Activated naive CD4-positive, alpha-beta T cell treated with anti-CD3 and anti-CD28 coated beads for 36 hours (primary cell): ENCODE measurements at regions of chr2 and their contacts with region 1.

Region 1: GRCh38 chr2:136384531-136385303 is 266.8 kb upstream of the CXCR4 start:
- DNase-seq: peak; percentile 73
- H3K4me3 Mint-ChIP-seq: no peak overlapping the region
- H3K27ac Mint-ChIP-seq: no peak overlapping the region
- H3K4me1 Mint-ChIP-seq: peaks cover 41% of the 10 kb centered on the region
- H3K27me3 Mint-ChIP-seq: no peaks in the 10 kb centered on the region

Region 2: GRCh38 chr2:135004005-135004746 is 1380.5 kb before region 1 on chr2:
- CTCF ChIA-PET with region 1: interaction called, 4 read pairs
- intact Hi-C with region 1: loop called (anchors 1 kb)
- DNase-seq: peak; percentile 79
- H3K4me3 Mint-ChIP-seq: no peak overlapping the region
- H3K27ac Mint-ChIP-seq: no peak overlapping the region
- H3K4me1 Mint-ChIP-seq: peaks cover 5% of the 10 kb centered on the region
- H3K27me3 Mint-ChIP-seq: peaks cover 12% of the 10 kb centered on the region

Region 3: GRCh38 chr2:135741395-135742324 is 643.1 kb before region 1 on chr2 and contains the start of gene UBXN4:
- CTCF ChIA-PET with region 1: no interaction called
- intact Hi-C with region 1: loop called (anchors 1 kb)
- DNase-seq: peak; percentile 98
- H3K4me3 Mint-ChIP-seq: peak within 1 kb of the TSS; percentile 98
- H3K27ac Mint-ChIP-seq: peak within 1 kb of the TSS; percentile 99
- H3K4me1 Mint-ChIP-seq: peaks cover 30% of the 10 kb centered on the region
- H3K27me3 Mint-ChIP-seq: no peaks in the 10 kb centered on the region
- total RNA-seq, gene UBXN4: 100 to 105 TPM

Region 4: GRCh38 chr2:135876066-135876711 is 508.5 kb before region 1 on chr2 and contains the start of gene MCM6:
- CTCF ChIA-PET with region 1: interaction called, 6 read pairs
- intact Hi-C with region 1: loop called (anchors 1 kb)
- DNase-seq: peak; percentile 100
- H3K4me3 Mint-ChIP-seq: peak within 1 kb of the TSS; percentile 91
- H3K27ac Mint-ChIP-seq: peak within 1 kb of the TSS; percentile 99
- H3K4me1 Mint-ChIP-seq: peaks cover 39% of the 10 kb centered on the region
- H3K27me3 Mint-ChIP-seq: no peaks in the 10 kb centered on the region
- total RNA-seq, gene MCM6: 221 to 226 TPM

Region 5: GRCh38 chr2:136008205-136008865 is 376.4 kb before region 1 on chr2:
- CTCF ChIA-PET with region 1: no interaction called
- intact Hi-C with region 1: loop called (anchors 1 kb)
- DNase-seq: peak; percentile 73
- H3K4me3 Mint-ChIP-seq: no peak overlapping the region
- H3K27ac Mint-ChIP-seq: peak overlapping the region; percentile 15
- H3K4me1 Mint-ChIP-seq: peaks cover 38% of the 10 kb centered on the region
- H3K27me3 Mint-ChIP-seq: no peaks in the 10 kb centered on the region

Region 6: GRCh38 chr2:136135921-136136906 is 248.5 kb before region 1 on chr2:
- CTCF ChIA-PET with region 1: interaction called, 7 read pairs
- intact Hi-C with region 1: loop called (anchors 1 kb)
- DNase-seq: peak; percentile 78
- H3K4me3 Mint-ChIP-seq: no peak overlapping the region
- H3K27ac Mint-ChIP-seq: peak overlapping the region; percentile 79
- H3K4me1 Mint-ChIP-seq: peaks cover 94% of the 10 kb centered on the region
- H3K27me3 Mint-ChIP-seq: peaks cover 25% of the 10 kb centered on the region

Region 7: DNA sequence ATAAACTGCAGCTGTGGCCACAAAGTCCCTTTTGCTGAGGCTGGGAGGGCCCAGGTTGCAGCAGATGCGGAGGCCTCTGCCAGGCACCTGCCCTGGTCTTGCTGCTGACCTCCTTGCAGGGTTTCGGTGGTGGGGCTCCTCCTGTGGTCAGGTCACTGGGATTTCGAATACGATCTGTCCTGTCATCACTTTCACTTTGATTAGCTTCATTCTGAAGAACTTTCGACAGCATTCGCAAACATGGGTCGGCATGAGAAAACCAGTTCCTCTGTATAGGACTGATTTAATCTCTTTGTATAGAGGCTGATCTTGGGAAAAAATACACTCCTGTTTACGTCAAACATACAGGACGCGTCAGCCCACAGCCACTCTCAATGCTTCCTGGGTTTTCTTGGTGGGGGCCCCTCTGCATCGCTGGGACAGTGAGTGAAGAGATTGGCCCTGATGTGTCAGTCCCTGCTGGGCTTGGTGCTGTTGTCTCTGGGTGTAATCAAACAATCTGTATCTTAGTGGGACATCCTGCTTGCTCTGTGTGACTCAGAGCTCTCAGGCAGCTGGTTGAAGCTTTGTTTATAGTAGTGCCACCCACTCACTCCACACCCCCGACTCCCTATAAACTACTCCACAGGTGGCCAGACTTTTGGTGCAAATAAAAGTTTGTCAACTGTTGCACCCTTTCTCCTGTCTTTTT is 57.4 kb before region 1 on chr2:
- CTCF ChIA-PET with region 1: interaction called, 4 read pairs
- intact Hi-C with region 1: loop called (anchors 1 kb)
- DNase-seq: peak; percentile 89
- H3K4me3 Mint-ChIP-seq: peak overlapping the region; percentile 52
- H3K27ac Mint-ChIP-seq: peak overlapping the region; percentile 82
- H3K4me1 Mint-ChIP-seq: peaks cover 62% of the 10 kb centered on the region
- H3K27me3 Mint-ChIP-seq: no peaks in the 10 kb centered on the region

Region 8: GRCh38 chr2:136703214-136703613 is 318.5 kb after region 1 on chr2:
- CTCF ChIA-PET with region 1: no interaction called
- intact Hi-C with region 1: no loop called
- DNase-seq: no peak
- H3K4me3 Mint-ChIP-seq: no peak overlapping the region
- H3K27ac Mint-ChIP-seq: no peak overlapping the region
- H3K4me1 Mint-ChIP-seq: no peaks in the 10 kb centered on the region
- H3K27me3 Mint-ChIP-seq: no peaks in the 10 kb centered on the region